ENCODE measurements at regions of chr3 and their contacts with region 1.

Region 1: DNA sequence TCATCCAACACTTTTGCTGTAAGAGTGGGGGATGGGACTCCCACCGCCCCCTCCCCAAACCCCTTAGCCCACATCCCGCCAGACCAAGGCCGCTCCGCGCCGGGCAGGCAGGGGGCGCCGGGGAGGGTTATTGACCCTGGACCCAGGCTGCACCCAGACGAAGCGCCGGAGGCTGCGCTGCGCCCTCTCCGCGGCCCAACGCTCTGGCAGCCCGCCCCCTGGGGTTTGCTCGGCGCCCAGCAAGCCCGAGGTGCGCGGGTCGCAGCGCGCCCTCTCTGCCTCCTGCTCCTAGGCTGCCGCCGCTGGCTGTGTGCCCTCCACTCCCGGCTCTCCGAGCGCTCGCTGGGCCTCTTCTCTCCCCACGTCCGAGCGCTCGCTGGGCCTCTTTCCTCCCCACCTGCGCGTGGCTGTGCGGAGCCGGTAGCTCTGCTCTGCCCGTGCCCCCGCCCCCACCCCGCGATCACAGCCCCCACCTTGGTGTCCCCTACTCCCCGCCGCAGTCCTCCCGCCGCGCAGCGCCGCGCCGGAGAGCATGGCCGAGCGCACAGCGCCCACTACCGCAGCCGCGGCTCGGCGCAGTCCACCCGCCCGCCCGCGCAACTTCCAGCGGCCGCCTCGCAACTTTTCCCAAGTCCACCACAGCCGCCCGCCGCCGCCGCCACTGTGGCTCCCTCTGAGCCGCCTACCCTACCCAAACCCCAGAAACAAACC is 1.2 kb downstream of the MECOM start:
- DNase-seq: peak; percentile 82
- ATAC-seq: peak; percentile 87 to 88

Region 2: GRCh38 chr3:169138849-169139420 is 523.4 kb before region 1 on chr3:
- intact Hi-C with region 1: loop called in 1 of 2 experiments (anchors 2 kb)
- DNase-seq: no peak
- ATAC-seq: no peak

Region 3: GRCh38 chr3:169218314-169218983 is 443.8 kb before region 1 on chr3:
- intact Hi-C with region 1: loop called in 1 of 2 experiments (anchors 5 kb)
- DNase-seq: peak; percentile 37
- ATAC-seq: peak; percentile 76 to 86

Region 4: DNA sequence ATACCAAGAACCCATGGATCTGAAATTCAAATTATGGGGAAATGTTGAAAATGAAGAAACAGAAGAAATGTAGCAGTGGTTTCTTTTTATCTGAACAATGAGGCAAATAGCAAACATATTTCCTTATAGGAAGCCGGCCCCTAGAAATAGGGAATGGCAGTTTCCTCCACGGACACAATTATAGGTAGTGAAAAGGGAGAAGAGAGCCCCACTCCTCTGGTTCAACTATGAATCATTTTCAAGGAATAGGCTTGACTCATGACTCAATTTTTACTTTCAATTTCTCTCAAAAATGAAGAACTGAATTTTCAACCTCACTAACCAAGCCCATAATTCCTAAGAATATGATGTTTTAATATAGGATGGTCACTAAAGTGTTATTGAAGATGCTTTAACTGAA is 241.9 kb before region 1 on chr3:
- intact Hi-C with region 1: no loop called
- DNase-seq: no peak
- ATAC-seq: no peak

Region 5: GRCh38 chr3:169710619-169711018 is 48.3 kb after region 1 on chr3:
- intact Hi-C with region 1: no loop called
- DNase-seq: no peak
- ATAC-seq: no peak